ENCODE measurements at regions of chr3 and their contacts with region 1.

Region 1: GRCh38 chr3:45962033-45962432 is 18.8 kb downstream of the CXCR6 start:
- DNase-seq: peak; percentile 48
- H3K4me3 Mint-ChIP-seq: peak overlapping the region; percentile 54
- H3K27ac Mint-ChIP-seq: peak overlapping the region; percentile 73
- H3K4me1 Mint-ChIP-seq: peaks cover 88% of the 10 kb centered on the region
- H3K27me3 Mint-ChIP-seq: no peaks in the 10 kb centered on the region

Region 2: GRCh38 chr3:45972534-45973402 is 10.7 kb after region 1 on chr3:
- intact Hi-C with region 1: loop called (anchors 1 kb)
- DNase-seq: no peak
- H3K4me3 Mint-ChIP-seq: peak overlapping the region; percentile 32
- H3K27ac Mint-ChIP-seq: peak overlapping the region; percentile 72
- H3K4me1 Mint-ChIP-seq: peaks cover 98% of the 10 kb centered on the region
- H3K27me3 Mint-ChIP-seq: no peaks in the 10 kb centered on the region

Region 3: DNA sequence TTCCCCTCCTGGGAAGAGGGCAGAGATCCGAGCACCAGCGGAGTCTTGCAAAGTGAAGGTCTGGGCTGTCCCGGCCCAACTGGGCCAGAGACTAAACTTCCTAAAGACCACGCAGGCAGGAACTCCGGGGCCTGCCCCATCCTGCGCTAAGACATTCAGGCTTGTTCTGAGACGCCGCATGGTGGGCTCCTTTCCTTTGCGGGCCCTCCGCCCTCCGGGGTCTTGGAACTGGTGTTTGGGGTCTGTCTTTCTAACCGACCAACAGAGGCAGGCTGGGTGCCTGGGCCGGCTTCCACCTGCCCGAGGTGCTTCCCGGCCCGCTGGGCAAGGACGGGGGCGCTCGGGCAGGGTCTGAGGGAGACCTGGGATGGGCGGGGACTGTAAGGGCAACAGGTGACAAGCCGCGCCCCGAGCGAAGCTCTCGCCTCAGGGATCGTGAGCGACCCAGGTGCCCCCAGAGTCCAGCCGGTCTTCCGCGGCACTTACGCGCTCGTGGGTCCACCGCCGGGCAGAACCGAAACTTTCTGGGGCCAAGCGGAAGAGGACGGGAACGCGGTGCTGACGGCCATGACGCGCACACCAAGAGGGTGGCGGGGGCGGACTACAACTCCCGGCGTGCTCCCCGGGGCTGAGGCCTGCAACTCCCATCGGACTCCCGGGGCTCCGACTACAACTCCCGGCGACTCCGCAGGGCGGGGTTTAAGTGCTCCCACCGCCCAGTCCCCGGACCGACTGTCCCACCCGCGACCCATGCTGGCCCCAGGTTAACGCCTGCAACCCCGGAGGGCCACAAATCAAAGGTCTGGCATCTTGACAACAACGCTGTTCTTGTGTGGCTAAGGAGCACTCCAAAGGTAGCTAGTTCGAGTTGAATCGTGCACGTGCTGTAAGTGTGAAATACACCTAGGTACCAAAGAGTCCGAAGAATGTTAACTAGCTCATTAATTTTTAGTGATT is 33.5 kb after region 1 on chr3 and contains the start of gene FYCO1:
- intact Hi-C with region 1: loop called (anchors 1 kb)
- DNase-seq: peak; percentile 82
- H3K4me3 Mint-ChIP-seq: peak within 1 kb of the TSS; percentile 87
- H3K27ac Mint-ChIP-seq: peak within 1 kb of the TSS; percentile 96
- H3K4me1 Mint-ChIP-seq: peaks cover 64% of the 10 kb centered on the region
- H3K27me3 Mint-ChIP-seq: peaks cover 3% of the 10 kb centered on the region
- total RNA-seq, gene FYCO1: 16.1 and 16.3 TPM in 2 replicates

Region 4: GRCh38 chr3:46065294-46065721 is 103.3 kb after region 1 on chr3:
- intact Hi-C with region 1: loop called (anchors 1 kb)
- DNase-seq: peak; percentile 64
- H3K4me3 Mint-ChIP-seq: peak overlapping the region; percentile 63
- H3K27ac Mint-ChIP-seq: peak overlapping the region; percentile 59
- H3K4me1 Mint-ChIP-seq: peaks cover 54% of the 10 kb centered on the region
- H3K27me3 Mint-ChIP-seq: peaks cover 41% of the 10 kb centered on the region

Region 5: GRCh38 chr3:46208167-46208704 is 246.2 kb after region 1 on chr3 and contains the start of gene CCR1:
- intact Hi-C with region 1: loop called (anchors 5 kb)
- DNase-seq: peak; percentile 58
- H3K4me3 Mint-ChIP-seq: peak within 1 kb of the TSS; percentile 78
- H3K27ac Mint-ChIP-seq: peak within 1 kb of the TSS; percentile 91
- H3K4me1 Mint-ChIP-seq: peaks cover 70% of the 10 kb centered on the region
- H3K27me3 Mint-ChIP-seq: no peaks in the 10 kb centered on the region
- total RNA-seq, gene CCR1: 22.6 and 23.2 TPM in 2 replicates

Measured in activated T-helper 1 cell treated with anti-CD3 and anti-CD28 coated beads, Interleukin-12 subunit alpha, Interleukin-12 subunit beta, Interleukin-2, Interleukin-4 antibody, amounts not matched to agents 30 ng/mL and 10 ng/mL and 1 ng/mL, durations not matched to agents 14 hours and 24 hours and 36 hours (primary cell).